Posterior vena cava (tissue), 2 donors: ENCODE measurements at regions of chr16 and their contacts with region 1.

Region 1: DNA sequence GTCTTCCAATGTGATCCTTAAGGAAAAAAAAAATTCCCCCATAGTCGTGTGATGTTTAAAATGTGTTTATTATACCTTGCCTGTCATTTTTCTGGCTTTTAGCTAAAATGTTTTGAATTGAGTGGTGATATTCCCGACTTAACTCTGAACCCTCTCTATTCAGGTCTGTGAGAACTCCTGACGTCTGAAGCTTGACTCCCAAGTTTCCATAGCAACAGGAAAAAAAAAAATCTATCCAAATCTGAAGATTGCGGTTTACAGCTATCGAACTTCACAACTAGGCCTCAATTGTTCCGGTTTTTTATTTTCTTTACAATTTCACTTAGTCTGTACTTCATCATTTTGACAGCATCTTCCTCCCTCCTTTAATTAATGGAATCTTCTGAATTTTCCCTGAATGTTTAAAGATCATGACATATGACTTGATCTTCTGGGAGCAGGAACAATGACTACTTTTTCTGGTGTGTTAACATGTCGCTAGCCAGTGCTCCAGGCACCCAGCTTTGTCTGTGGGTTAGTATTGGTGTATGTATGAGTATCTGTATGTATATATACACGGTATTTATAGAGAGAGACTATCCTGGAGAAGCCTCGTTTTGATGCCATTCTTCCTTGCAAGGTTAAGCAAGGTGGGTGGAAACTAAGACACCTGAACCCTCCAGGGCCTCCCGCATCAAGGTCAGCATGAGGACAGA is 12.8 kb upstream of the HSBP1 start:
- DNase-seq: no peak

Region 2: GRCh38 chr16:83402967-83403366 is 392.0 kb before region 1 on chr16:
- intact Hi-C with region 1: no loop called
- DNase-seq: no peak

Region 3: DNA sequence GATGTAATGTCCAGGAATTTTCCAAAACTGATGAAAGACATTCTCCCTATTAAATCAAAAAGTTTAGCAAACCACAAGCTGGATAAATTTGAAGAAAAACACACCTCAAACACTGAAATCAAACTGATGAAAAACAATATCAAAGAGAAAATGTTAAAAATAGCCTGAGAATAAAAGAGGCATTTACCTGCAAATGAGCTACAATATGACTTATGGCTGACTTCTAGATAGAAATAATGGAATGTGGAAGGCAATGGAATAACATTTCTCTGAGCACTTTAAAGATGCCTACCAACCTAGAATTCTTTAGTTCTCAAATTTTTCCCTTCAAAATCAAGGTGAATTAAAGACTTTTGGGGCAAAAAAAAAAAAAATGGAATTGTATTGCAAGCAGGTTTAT is 39.6 kb before region 1 on chr16:
- intact Hi-C with region 1: no loop called
- DNase-seq: no peak

Region 4: GRCh38 chr16:83771306-83771942 is 23.6 kb before region 1 on chr16:
- intact Hi-C with region 1: loop called in 1 of 2 experiments (anchors 1 kb)
- DNase-seq: no peak

Region 5: GRCh38 chr16:83887081-83887480 is 92.1 kb after region 1 on chr16:
- intact Hi-C with region 1: no loop called
- DNase-seq: no peak